Activated CD4-positive, alpha-beta T cell treated with anti-CD3 and anti-CD28 coated beads, Interleukin-2, amount 10 ng/mL, durations not matched to agents 24 days and 14 days (primary cell): ENCODE measurements at regions of chr3 and their contacts with region 1.

Region 1: DNA sequence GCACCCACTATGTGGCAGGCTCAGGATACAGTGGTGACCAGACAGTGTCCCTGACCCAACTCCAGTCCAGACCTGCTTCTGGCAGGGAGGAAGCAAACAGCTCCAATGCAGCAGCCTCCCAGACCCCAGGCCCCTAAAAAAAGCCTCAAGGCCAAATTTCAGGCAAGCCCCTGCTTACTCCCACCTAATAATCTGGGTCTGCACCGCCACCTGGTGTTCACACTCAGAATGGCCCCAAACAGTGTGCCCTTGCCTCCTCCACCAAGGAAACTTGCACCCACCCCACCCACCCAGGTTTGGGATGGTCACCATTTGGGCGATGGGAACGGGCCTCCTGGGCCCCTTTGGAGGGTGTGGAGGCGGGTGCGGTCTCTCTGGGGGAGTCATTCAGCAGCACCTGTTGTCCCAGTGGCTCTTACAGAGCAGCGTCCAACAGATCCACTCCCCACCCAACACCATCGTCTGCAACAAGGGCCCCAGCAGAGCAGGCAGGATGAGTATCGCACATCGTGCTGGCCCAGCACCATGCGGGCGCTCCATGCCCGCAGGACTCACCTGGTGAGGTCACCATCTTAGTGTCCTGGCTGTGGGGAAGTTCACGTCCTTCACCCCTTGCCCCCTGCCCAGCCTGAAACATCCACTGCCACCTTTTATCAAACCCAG is 17.3 kb downstream of the C3orf18 start:
- DNase-seq: peak; percentile 90
- H3K4me3 Mint-ChIP-seq: no peak overlapping the region
- H3K27ac Mint-ChIP-seq: no peak overlapping the region
- H3K4me1 Mint-ChIP-seq: peaks cover 12% of the 10 kb centered on the region
- H3K27me3 Mint-ChIP-seq: peaks cover 2% of the 10 kb centered on the region

Region 2: DNA sequence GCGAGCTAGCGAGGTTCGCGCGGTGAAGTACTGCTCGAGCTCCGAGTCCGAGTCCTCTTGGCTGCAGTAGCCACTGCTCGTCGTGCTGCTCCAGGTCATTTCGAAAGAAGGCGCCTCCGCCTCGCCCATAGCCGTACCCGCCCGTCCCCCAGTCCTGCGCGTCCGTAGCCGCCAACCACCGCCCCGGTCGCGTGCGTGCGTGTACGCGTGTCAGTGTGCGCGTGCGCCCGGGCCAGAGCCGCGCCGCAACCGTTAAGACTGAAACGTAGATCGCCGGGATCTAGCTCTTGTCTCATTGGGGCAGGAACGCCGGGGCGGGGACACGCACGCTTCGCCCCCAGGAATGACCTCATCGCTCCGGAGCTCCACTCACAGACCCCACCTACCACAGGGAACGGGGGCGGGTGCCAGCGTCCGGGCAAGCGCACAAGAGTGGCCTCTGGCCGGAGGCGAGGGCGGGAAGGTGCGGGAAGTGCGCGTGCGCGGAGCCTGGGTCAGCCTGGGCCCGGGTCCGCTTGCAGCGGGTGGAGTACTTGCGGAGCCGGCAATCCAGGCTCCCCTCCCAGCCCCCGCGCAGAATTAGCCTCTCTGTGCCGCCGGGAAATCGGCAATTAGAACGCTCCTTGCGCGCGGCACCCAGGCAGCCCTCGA is 212.9 kb before region 1 on chr3:
- intact Hi-C with region 1: no loop called
- DNase-seq: peak; percentile 99
- H3K4me3 Mint-ChIP-seq: peak overlapping the region; percentile 85
- H3K27ac Mint-ChIP-seq: peak overlapping the region; percentile 99
- H3K4me1 Mint-ChIP-seq: peaks cover 54% of the 10 kb centered on the region
- H3K27me3 Mint-ChIP-seq: no peaks in the 10 kb centered on the region

Region 3: DNA sequence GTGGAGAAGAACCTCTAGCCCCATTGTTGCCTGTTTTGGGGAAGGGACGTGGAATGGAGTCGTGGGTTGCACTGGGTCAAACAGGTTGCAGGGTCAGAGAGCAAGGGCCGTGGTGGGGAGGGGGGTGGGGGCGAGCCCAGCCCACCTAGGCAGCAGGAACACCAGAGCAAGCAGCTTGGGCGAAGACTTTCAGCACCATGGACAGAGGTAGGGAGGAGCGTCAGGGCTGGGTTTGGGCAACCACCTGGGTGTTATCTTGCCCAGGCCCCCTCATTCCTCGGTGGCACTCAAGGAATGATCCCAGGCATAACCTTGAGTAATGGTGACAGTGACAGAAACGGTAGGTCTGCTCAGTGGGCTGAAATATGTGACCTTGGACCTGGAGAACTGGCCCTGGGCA is 145.0 kb before region 1 on chr3:
- intact Hi-C with region 1: no loop called
- DNase-seq: peak; percentile 86
- H3K4me3 Mint-ChIP-seq: no peak overlapping the region
- H3K27ac Mint-ChIP-seq: no peak overlapping the region
- H3K4me1 Mint-ChIP-seq: no peaks in the 10 kb centered on the region
- H3K27me3 Mint-ChIP-seq: no peaks in the 10 kb centered on the region

Region 4: GRCh38 chr3:50519471-50520089 is 30.6 kb before region 1 on chr3:
- intact Hi-C with region 1: loop called (anchors 2 kb)
- DNase-seq: peak; percentile 93
- H3K4me3 Mint-ChIP-seq: no peak overlapping the region
- H3K27ac Mint-ChIP-seq: no peak overlapping the region
- H3K4me1 Mint-ChIP-seq: peaks cover 6% of the 10 kb centered on the region
- H3K27me3 Mint-ChIP-seq: peaks cover 26% of the 10 kb centered on the region